Naive thymus-derived CD4-positive, alpha-beta T cell (primary cell): ENCODE measurements at regions of chr2 and their contacts with region 1.

Region 1: DNA sequence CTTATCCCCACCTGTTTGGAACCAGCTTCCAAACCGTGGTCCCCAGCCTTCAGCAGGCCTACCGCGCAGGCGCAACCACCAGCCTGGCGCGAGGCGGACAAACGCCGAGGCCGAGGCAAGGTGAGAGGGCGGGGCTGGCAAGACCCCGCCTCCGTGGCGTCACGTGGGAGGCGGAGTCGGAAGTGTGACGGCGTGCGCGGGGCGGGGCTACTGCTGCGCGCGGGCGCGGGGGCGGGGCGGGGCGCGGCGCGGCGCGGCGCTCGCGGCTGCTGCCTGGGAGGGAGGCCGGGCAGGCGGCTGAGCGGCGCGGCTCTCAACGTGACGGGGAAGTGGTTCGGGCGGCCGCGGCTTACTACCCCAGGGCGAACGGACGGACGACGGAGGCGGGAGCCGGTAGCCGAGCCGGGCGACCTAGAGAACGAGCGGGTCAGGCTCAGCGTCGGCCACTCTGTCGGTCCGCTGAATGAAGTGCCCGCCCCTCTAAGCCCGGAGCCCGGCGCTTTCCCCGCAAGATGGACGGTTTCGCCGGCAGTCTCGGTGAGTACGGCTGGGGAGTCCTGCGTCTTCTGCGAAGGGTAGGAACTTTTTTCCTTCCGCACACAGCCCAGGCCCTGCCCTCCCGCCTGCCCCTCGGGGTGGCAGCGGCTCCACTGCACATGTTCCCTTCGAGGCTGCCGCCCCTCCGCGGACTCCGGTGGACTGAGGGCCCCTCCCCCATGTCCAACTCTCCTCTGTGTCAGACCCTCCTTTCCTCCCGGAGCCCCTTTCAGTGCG is at the start of gene EML4:
- DNase-seq: peak; percentile 82 to 98 (median 89)
- ATAC-seq: peak; percentile 97
- H3K4me3 ChIP-seq: peak within 1 kb of the TSS; percentile 88
- H3K4me3 Mint-ChIP-seq: peak within 1 kb of the TSS in 2 of 10 donors; percentile 26 to 49
- H3K27ac ChIP-seq: peak within 1 kb of the TSS; percentile 96
- H3K27ac Mint-ChIP-seq: peak within 1 kb of the TSS in 4 of 9 donors; percentile 75 to 94 (median 84)
- H3K4me1 ChIP-seq: peaks cover 15 to 21% of the 10 kb centered on the region in 2 donors
- H3K4me1 Mint-ChIP-seq: peaks cover 9 to 27% (median 12%) of the 10 kb centered on the region in 7 donors
- H3K27me3 ChIP-seq: no peaks in the 10 kb centered on the region
- H3K27me3 Mint-ChIP-seq: peaks cover 0 to 9% (median 0%) of the 10 kb centered on the region in 5 donors
- total RNA-seq, gene EML4: 91.1 to 167 (median 143) TPM

Region 2: DNA sequence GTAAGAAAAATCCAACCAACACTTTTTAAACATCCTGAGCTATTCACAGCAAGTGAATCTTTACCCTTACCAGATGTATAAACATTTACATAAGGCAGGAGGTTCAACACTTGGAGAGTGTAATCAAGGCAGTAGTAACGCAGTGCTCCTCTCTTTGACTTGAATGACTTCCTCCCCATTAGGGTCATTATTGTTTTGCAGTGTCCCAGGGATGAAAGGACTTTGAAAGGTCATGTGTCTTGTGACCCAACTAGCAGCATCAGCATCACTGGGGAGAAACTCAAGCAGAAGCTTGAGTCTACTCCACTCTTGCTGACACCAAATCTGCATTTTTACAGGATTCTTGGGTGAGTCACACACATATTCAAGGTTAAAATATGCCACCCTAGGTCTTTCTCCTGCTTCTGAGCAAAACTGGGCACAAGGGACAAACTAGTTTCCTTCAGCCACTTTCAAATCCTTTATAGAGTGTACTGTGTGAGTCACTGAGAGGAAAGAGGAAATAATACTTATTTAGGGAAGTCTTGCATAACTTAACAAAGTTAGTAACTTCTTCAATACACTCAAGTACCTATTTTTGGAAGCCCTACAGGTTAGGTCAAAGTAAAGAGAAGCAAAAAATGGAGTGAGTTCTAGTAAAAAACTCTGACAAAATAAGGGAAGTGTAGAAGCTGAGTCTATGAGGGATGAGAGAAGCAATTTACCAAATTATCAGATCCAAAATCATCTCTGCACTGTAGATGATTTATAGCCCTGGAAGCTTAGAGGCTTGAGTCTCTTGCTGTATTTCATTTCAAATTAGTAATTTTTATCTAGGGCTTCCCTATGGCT is 51.1 kb before region 1 on chr2:
- CTCF ChIA-PET with region 1: no interaction called
- POLR2A ChIA-PET with region 1: interaction called, 17 read pairs
- intact Hi-C with region 1: no loop called
- DNase-seq: no peak
- ATAC-seq: peak; percentile 94
- H3K4me3 ChIP-seq: no peak overlapping the region
- H3K4me3 Mint-ChIP-seq: peak overlapping the region in 4 of 10 donors; percentile 15 to 60 (median 50)
- H3K27ac ChIP-seq: no peak overlapping the region
- H3K27ac Mint-ChIP-seq: peak overlapping the region; percentile 38 to 90 (median 64)
- H3K4me1 ChIP-seq: peaks cover 26 to 31% of the 10 kb centered on the region in 2 donors
- H3K4me1 Mint-ChIP-seq: peaks cover 30 to 72% (median 57%) of the 10 kb centered on the region in 7 donors
- H3K27me3 ChIP-seq: no peaks in the 10 kb centered on the region
- H3K27me3 Mint-ChIP-seq: peaks cover 0 to 2% (median 0%) of the 10 kb centered on the region in 5 donors

Region 3: GRCh38 chr2:42132966-42133641 is 36.2 kb before region 1 on chr2:
- CTCF ChIA-PET with region 1: interaction called, 7 read pairs
- POLR2A ChIA-PET with region 1: interaction called, 39 read pairs
- intact Hi-C with region 1: loop called (anchors 1 kb)
- DNase-seq: peak; percentile 53 to 92 (median 78)
- ATAC-seq: peak; percentile 94
- H3K4me3 ChIP-seq: peak overlapping the region; percentile 38
- H3K4me3 Mint-ChIP-seq: peak overlapping the region; percentile 66 to 86 (median 76)
- H3K27ac ChIP-seq: peak overlapping the region; percentile 82
- H3K27ac Mint-ChIP-seq: peak overlapping the region; percentile 68 to 98 (median 96)
- H3K4me1 ChIP-seq: peaks cover 81 to 89% of the 10 kb centered on the region in 2 donors
- H3K4me1 Mint-ChIP-seq: peaks cover 57 to 95% (median 93%) of the 10 kb centered on the region in 7 donors
- H3K27me3 ChIP-seq: no peaks in the 10 kb centered on the region
- H3K27me3 Mint-ChIP-seq: no peaks in the 10 kb centered on the region

Region 4: DNA sequence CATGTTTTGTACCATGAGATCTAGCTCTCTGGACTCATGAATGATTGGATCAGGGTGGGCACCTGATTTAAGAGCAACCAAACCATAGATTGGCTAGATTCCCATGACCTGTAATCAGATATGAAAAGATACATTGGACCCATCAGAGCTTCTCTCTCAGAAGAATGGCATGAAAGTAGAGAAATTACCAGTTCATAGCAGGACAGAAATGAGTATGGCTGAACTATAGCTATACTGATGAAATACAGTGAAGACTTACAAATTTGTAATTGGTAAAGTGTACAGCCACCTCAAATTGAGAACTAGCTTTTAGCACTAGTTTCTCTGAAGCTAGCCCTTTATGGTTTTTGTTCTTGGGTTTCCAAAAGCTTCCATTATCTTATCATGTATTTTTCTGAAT is 19.1 kb before region 1 on chr2:
- CTCF ChIA-PET with region 1: interaction called, 3 read pairs
- POLR2A ChIA-PET with region 1: interaction called, 3 read pairs
- intact Hi-C with region 1: loop called in 1 of 2 experiments (anchors 2 kb)
- DNase-seq: no peak
- ATAC-seq: no peak
- H3K4me3 ChIP-seq: no peak overlapping the region
- H3K4me3 Mint-ChIP-seq: no peak overlapping the region
- H3K27ac ChIP-seq: no peak overlapping the region
- H3K27ac Mint-ChIP-seq: peak overlapping the region in 2 of 9 donors; percentile 21 to 41
- H3K4me1 ChIP-seq: no peaks in the 10 kb centered on the region
- H3K4me1 Mint-ChIP-seq: peaks cover 5 to 11% (median 7%) of the 10 kb centered on the region in 7 donors
- H3K27me3 ChIP-seq: no peaks in the 10 kb centered on the region
- H3K27me3 Mint-ChIP-seq: peaks cover 0 to 3% (median 0%) of the 10 kb centered on the region in 5 donors

Region 5: DNA sequence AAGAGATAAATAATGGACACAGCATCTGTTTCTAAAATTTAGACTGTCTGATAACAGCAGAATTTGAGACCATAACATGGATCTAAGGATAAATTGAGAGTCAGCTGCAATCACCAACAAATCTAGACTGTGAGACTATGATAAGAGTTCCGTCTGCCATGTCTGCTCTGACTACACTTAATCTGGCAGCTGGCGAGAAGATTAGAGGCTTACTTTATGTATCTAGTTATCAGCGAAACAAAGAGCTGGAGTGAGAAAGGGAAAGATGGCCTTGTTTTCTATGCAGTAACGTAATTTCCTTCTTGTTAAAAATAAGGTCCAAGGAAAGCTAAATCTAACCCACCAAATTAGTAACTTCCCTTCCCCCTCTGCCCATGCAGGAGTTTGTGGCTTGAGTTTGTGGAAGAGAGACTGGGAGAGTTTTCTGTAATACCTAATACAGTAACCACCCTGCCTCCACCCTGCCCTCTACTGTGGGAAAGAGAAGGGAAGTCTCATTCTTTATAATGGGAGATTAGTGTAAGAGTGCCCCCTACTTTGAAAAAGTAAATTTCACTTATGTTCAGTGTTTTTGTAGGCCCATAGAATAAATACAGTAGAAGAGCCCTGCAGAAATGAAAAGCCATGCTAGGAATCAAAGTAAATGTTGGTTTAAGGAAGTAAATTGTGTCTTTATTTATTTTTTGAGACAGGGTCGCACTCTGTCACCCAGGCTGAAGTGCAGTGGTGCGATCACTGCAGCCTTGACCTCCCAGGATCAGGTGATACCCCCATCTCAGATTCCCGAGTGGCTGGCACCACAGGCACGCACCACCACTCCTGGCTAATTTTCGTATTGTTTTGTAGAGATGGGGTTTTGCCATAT is 27.3 kb after region 1 on chr2:
- CTCF ChIA-PET with region 1: interaction called, 24 read pairs
- POLR2A ChIA-PET with region 1: interaction called, 13 read pairs
- intact Hi-C with region 1: loop called (anchors 1 kb)
- DNase-seq: peak in 7 of 9 donors; percentile 56 to 75 (median 68)
- ATAC-seq: peak; percentile 91
- H3K4me3 ChIP-seq: no peak overlapping the region
- H3K4me3 Mint-ChIP-seq: peak overlapping the region in 9 of 10 donors; percentile 1 to 66 (median 41)
- H3K27ac ChIP-seq: peak overlapping the region; percentile 22
- H3K27ac Mint-ChIP-seq: peak overlapping the region in 8 of 9 donors; percentile 17 to 91 (median 74)
- H3K4me1 ChIP-seq: peaks cover 42 to 48% of the 10 kb centered on the region in 2 donors
- H3K4me1 Mint-ChIP-seq: peaks cover 54 to 93% (median 84%) of the 10 kb centered on the region in 7 donors
- H3K27me3 ChIP-seq: no peaks in the 10 kb centered on the region
- H3K27me3 Mint-ChIP-seq: no peaks in the 10 kb centered on the region